ENCODE measurements at regions of chr2 and their contacts with region 1.

Region 1: GRCh38 chr2:208820014-208820688 is 413.6 kb downstream of the PTH2R start:
- DNase-seq: no peak
- H3K4me3 Mint-ChIP-seq: no peak overlapping the region
- H3K27ac Mint-ChIP-seq: no peak overlapping the region
- H3K4me1 Mint-ChIP-seq: peaks cover 8% of the 10 kb centered on the region
- H3K27me3 Mint-ChIP-seq: no peaks in the 10 kb centered on the region
- CTCF ChIP-seq: peak; percentile 28

Region 2: GRCh38 chr2:208984742-208985103 is 164.6 kb after region 1 on chr2:
- CTCF ChIA-PET with region 1: no interaction called
- intact Hi-C with region 1: loop called (anchors 10 kb)
- DNase-seq: peak; percentile 11
- H3K4me3 Mint-ChIP-seq: no peak overlapping the region
- H3K27ac Mint-ChIP-seq: peak overlapping the region; percentile 19
- H3K4me1 Mint-ChIP-seq: peaks cover 28% of the 10 kb centered on the region
- H3K27me3 Mint-ChIP-seq: no peaks in the 10 kb centered on the region
- CTCF ChIP-seq: no peak

Region 3: DNA sequence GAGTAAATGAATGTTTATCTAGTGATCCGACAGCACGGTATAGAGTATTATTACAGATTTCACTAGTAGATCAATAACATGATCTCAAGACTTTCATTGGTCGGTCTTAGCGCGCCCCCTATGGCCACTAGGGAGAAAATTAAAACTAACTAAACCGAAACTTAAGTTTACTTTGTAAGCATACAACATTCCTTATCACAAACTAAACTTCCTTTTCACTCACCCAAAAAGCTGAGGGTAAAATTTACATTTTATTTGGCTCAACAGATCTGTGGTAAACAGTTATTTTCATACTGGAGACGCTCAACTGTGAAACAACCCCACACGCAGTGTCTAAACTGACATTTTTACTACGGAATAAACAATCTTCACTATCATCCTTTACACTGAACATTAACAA is 388.1 kb after region 1 on chr2:
- CTCF ChIA-PET with region 1: interaction called, 6 read pairs
- intact Hi-C with region 1: loop called (anchors 1 kb)
- DNase-seq: peak; percentile 63
- H3K4me3 Mint-ChIP-seq: peak overlapping the region; percentile 54
- H3K27ac Mint-ChIP-seq: peak overlapping the region; percentile 31
- H3K4me1 Mint-ChIP-seq: peaks cover 8% of the 10 kb centered on the region
- H3K27me3 Mint-ChIP-seq: no peaks in the 10 kb centered on the region
- CTCF ChIP-seq: peak; percentile 81

Region 4: DNA sequence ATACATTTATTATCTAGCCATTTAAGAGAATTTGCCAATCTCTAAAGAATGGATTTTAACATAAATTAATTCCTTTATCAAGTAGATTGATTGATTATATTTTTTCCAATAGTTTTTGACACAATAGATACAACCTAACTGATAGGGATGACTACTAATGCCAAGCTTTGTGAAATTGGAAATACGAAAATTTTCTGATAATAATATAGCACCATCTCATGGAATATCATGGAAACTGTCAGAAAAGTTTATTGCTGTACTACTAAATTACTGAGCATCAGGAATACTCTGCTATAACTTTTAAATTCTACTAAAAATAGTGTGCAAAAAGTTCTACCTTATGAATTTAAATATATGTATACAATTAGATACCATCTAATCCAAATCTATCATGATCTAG is 501.9 kb after region 1 on chr2:
- CTCF ChIA-PET with region 1: interaction called, 5 read pairs
- intact Hi-C with region 1: loop called (anchors 1 kb)
- DNase-seq: no peak
- H3K4me3 Mint-ChIP-seq: no peak overlapping the region
- H3K27ac Mint-ChIP-seq: no peak overlapping the region
- H3K4me1 Mint-ChIP-seq: peaks cover 14% of the 10 kb centered on the region
- H3K27me3 Mint-ChIP-seq: no peaks in the 10 kb centered on the region
- CTCF ChIP-seq: no peak

Measured in Calu3 (cell line).